ENCODE measurements at regions of chr17 and their contacts with region 1.

Region 1: DNA sequence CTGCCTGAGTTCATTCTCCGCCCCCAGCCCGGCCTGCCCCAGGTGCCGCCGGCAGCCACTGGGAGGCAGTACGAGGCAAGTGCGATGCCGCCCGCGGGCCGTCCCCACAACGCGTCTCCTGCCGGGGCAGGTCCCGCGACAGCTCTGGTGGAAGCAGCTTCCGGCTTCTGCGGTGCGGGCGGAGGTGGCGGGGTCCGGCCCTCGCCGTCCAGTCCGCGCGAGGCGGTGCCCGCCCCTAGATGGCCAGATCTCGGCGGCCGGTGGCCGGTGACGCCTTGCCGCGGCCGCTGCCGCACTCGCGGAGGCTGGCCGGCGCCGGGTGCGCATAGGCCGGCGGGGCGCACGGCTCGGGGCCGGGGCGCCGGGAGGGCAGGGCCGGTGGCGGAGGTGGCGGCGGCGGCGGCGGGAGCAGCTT is 1.8 kb downstream of the GJD3 start:
- DNase-seq: peak; percentile 96
- CTCF ChIP-seq: peak; percentile 91

Region 2: DNA sequence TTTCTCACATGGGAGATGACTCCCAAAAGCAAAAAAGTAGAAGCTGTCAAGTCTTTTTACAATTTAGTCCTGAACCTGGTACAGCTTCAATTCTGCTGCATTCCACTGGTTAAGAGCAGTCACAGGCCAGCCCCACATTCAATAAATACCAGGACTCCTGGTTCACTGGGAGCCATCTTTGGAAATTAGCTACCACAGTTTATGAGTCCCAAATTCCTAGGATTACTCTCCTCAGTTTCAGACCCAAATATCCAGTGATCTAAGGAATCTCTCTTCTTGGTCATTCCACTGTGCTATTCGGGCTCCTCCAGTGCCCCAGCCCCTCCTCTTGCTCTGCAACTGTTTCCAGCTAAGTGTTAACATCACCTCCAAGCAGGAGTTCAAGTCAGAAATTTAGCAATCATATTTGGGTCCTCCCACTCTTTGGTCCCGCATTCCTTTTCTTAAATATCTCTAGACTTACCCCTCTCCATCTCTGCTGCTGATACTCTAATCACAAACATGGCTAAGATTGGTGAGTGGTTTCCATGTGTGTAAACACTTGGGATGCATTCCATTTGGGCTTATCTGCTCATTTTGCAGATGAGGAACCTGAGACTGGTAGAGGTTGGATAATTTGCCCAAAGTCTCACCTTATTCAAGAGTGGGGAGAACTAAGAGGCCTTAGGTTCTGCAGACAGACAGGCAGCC is 153.2 kb before region 1 on chr17:
- in situ Hi-C with region 1: loop called (anchors 10 kb)
- DNase-seq: no peak
- CTCF ChIP-seq: no peak

Region 3: GRCh38 chr17:40536295-40537171 is 173.8 kb after region 1 on chr17:
- in situ Hi-C with region 1: loop called (anchors 10 kb)
- DNase-seq: no peak
- CTCF ChIP-seq: no peak